MCF 10A (cell line): ENCODE measurements at regions of chr5 and their contacts with region 1.

Region 1: GRCh38 chr5:137743031-137743640 is 7.2 kb upstream of the KLHL3 start:
- DNase-seq: peak; percentile 91
- H3K4me3 Mint-ChIP-seq: no peak overlapping the region
- H3K27ac Mint-ChIP-seq: no peak overlapping the region
- H3K4me1 Mint-ChIP-seq: no peaks in the 10 kb centered on the region
- H3K27me3 Mint-ChIP-seq: no peaks in the 10 kb centered on the region
- CTCF ChIP-seq: peak; percentile 62

Region 2: GRCh38 chr5:137619191-137619870 is 123.8 kb before region 1 on chr5:
- CTCF ChIA-PET with region 1: interaction called, 690 read pairs
- POLR2A ChIA-PET with region 1: interaction called, 12 read pairs
- intact Hi-C with region 1: no loop called
- DNase-seq: peak; percentile 79
- H3K4me3 Mint-ChIP-seq: no peak overlapping the region
- H3K27ac Mint-ChIP-seq: peak overlapping the region; percentile 46
- H3K4me1 Mint-ChIP-seq: peaks cover 41% of the 10 kb centered on the region
- H3K27me3 Mint-ChIP-seq: no peaks in the 10 kb centered on the region
- CTCF ChIP-seq: no peak

Region 3: DNA sequence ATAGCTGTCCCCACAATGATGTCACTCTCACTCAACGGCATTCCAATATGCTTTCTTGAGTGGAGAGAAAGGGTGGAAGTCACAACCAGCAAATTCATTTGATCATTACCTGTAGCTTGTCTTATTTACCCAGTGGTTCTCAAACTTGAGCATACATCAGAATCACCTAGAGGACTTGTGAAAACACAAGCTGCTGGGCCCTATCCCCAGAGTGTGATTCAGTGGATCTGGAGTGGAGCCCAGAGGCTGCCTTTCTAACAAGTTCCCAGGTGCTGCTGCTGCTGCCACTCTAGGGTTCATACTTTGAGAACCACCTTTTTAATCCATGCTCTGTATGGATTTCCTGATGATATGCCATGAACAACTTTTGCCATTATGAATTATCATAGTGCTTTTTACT is 102.0 kb before region 1 on chr5:
- CTCF ChIA-PET with region 1: interaction called, 86 read pairs
- POLR2A ChIA-PET with region 1: interaction called, 3 read pairs
- intact Hi-C with region 1: no loop called
- DNase-seq: peak; percentile 49
- H3K4me3 Mint-ChIP-seq: no peak overlapping the region
- H3K27ac Mint-ChIP-seq: no peak overlapping the region
- H3K4me1 Mint-ChIP-seq: no peaks in the 10 kb centered on the region
- H3K27me3 Mint-ChIP-seq: no peaks in the 10 kb centered on the region
- CTCF ChIP-seq: no peak

Region 4: DNA sequence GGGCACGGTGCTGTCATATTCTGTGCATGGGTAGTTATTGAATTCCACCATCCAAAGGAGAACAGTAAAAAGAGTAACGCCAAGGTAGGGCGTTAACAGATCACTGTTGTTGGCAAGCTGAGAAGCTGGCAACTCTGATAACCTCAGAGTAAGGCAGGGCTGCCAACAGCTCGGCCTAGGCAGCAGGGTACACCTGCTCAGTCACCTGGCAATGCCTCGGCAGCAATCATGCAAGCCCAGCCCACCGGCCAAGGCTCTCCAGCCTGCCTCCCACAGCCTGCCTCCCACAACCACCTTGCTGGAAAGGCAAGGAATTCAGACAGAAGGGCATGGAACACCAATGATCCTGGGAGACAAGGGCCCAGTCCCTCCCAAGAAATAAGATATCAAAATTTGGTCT is 71.1 kb before region 1 on chr5:
- CTCF ChIA-PET with region 1: interaction called, 35 read pairs
- POLR2A ChIA-PET with region 1: interaction called, 3 read pairs
- intact Hi-C with region 1: no loop called
- DNase-seq: no peak
- H3K4me3 Mint-ChIP-seq: no peak overlapping the region
- H3K27ac Mint-ChIP-seq: no peak overlapping the region
- H3K4me1 Mint-ChIP-seq: no peaks in the 10 kb centered on the region
- H3K27me3 Mint-ChIP-seq: peaks cover 11% of the 10 kb centered on the region
- CTCF ChIP-seq: no peak

Region 5: DNA sequence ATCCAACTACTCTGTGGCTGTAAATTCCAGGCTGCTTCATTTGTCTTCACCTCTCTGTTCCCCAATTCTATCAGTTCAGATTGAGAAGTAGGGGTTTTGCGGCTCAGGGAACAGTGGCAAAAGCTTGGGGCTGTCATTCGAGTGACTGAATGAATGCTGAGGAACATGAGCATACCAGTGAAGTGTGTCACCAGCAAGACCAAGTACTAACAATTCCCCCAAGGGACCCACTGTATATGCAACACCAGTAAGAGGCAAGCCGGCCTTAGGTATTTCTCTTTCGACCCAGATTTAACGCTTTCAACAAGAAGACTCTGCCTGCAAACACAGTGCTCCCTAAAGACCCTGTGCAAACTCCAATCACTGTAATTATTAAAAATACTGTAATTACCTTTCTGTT is 33.1 kb before region 1 on chr5:
- CTCF ChIA-PET with region 1: interaction called, 21 read pairs
- POLR2A ChIA-PET with region 1: no interaction called
- intact Hi-C with region 1: no loop called
- DNase-seq: no peak
- H3K4me3 Mint-ChIP-seq: no peak overlapping the region
- H3K27ac Mint-ChIP-seq: no peak overlapping the region
- H3K4me1 Mint-ChIP-seq: no peaks in the 10 kb centered on the region
- H3K27me3 Mint-ChIP-seq: no peaks in the 10 kb centered on the region
- CTCF ChIP-seq: no peak

Region 6: DNA sequence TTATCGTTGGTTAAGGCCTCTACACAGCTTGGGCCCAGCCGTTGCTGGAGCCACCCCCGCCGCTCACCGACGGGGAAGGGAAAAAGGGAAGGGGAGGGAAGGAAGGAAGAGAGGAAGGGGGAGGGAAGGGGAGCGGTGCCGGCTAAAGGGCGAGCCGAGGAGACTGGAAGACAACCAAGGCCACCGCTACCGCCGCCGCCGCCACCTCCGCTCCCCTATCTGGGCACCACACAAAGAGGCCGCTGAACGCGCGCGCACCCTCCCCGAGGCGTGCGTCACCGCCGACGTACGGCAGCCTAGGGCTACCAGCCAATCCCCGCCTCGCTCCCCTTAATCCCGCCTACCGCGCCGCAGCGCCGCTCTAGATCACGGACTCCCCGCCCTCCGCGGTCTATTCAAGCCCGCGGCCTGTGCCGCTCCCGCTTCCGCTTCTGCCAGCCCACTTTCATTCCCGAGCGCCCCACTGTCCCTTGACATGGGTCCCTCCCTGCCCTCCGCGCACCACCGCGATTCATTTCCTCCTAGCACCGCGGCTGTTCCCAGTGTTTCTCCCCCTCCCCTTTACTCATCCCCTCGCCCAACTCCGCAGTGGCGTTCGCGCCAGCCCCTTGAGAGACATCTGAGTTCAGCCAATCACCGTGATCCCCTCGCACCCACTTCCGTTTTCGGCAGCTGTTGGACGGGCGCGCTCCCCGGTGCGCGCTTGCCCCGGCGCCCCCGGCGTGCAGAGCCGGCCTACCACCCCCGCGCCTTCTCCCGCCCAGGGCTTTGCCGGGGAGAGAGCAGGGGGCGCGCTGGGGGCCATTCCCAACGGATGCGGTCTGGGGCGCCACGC is 11.2 kb after region 1 on chr5 and contains the start of gene HNRNPA0:
- CTCF ChIA-PET with region 1: interaction called, 48 read pairs
- POLR2A ChIA-PET with region 1: interaction called, 6 read pairs
- intact Hi-C with region 1: no loop called
- DNase-seq: peak; percentile 98
- H3K4me3 Mint-ChIP-seq: peak within 1 kb of the TSS; percentile 87
- H3K27ac Mint-ChIP-seq: peak within 1 kb of the TSS; percentile 99
- H3K4me1 Mint-ChIP-seq: peaks cover 28% of the 10 kb centered on the region
- H3K27me3 Mint-ChIP-seq: no peaks in the 10 kb centered on the region
- CTCF ChIP-seq: no peak
- total RNA-seq, gene HNRNPA0: 30.8 and 31.8 TPM in 2 replicates